ENCODE measurements at regions of chr5 and their contacts with region 1.

Region 1: GRCh38 chr5:96247097-96247701 is 185.8 kb downstream of the PCSK1 start:
- DNase-seq: peak in 4 of 5 donors; percentile 10 to 52 (median 44)
- ATAC-seq: peak; percentile 88 to 96 (median 95)
- H3K4me3 ChIP-seq: peak overlapping the region in 1 of 12 donors; percentile 1
- H3K27ac ChIP-seq: peak overlapping the region; percentile 51 to 81 (median 74)
- H3K4me1 ChIP-seq: peaks cover 0 to 44% (median 15%) of the 10 kb centered on the region in 12 donors
- H3K27me3 ChIP-seq: no peaks in the 10 kb centered on the region
- CTCF ChIP-seq: no peak
- POLR2A ChIP-seq: no peak

Region 2: DNA sequence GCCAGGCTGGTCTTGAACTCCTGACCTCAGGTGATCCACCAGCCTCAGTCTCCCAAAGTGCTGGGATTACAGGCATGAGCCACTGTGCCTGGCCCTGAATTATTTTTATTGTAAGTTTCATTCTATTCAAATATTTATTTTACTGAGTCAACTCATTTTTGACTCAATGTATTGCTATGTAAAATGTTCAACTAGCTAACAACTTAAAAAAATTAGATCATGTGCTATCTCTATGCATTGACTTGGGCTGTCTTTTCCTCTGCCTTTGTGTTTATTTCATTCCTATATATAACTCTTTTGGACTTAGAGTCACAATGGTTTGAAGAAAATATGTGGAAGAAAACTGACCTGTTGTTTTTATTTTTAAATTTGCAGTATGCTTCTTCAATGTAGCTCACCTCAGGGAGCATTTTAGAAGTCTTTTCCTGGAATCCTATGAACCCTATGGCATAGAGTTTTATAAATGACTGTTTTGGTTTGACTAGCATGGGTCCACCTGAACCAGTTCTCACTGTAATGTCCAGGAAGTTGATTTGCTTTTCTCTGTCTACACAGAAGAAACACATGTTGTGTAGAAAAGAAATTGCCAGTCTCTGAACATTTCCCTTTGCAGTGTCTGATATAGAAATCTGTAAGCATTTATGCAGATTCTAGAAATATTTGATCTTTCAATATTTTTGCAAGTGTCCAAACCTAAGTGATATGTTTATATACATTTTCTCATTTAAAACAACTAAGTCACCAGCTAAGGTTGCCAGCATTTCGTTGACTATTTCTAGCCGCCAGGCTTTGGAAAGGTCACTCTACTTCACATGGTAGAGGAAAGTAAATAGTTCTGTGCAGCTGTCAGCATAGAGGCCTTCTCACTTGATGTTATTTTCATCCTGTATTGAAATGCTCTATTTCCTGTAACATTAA is 47.0 kb after region 1 on chr5:
- intact Hi-C with region 1: loop called in 2 of 10 experiments (anchors 5 kb)
- DNase-seq: peak in 1 of 5 donors; percentile 30
- ATAC-seq: peak; percentile 53 to 78 (median 71)
- H3K4me3 ChIP-seq: no peak overlapping the region
- H3K27ac ChIP-seq: peak overlapping the region in 11 of 12 donors; percentile 33 to 75 (median 54)
- H3K4me1 ChIP-seq: peaks cover 0 to 42% (median 12%) of the 10 kb centered on the region in 12 donors
- H3K27me3 ChIP-seq: no peaks in the 10 kb centered on the region
- CTCF ChIP-seq: no peak
- POLR2A ChIP-seq: no peak

Region 3: GRCh38 chr5:96324708-96325107 is 77.5 kb after region 1 on chr5:
- intact Hi-C with region 1: loop called in 1 of 10 experiments (anchors 10 kb)
- DNase-seq: no peak
- ATAC-seq: no peak
- H3K4me3 ChIP-seq: no peak overlapping the region
- H3K27ac ChIP-seq: no peak overlapping the region
- H3K4me1 ChIP-seq: peaks cover 0 to 10% (median 0%) of the 10 kb centered on the region in 12 donors
- H3K27me3 ChIP-seq: no peaks in the 10 kb centered on the region
- CTCF ChIP-seq: no peak
- POLR2A ChIP-seq: no peak

Region 4: DNA sequence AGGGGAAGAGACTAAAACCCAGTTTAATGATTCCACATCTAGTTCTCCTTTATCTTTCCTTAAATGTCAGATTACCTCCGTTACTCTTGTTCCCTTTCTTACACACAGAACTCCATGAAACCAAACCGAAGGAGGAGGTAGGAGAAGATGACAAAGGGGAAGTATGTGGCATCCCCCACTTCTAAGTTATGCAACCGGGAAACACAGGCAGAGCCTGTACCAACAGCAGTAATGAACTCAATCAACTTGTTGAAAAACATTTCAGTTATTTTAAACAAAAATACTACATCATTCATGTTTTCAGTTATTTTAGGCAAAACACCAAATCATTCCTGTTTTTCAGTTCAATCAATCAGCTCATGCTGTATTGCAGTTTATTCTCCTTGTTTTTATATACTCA is 84.0 kb after region 1 on chr5:
- intact Hi-C with region 1: loop called in 4 of 10 experiments (anchors 5 to 10 kb)
- DNase-seq: no peak
- ATAC-seq: no peak
- H3K4me3 ChIP-seq: no peak overlapping the region
- H3K27ac ChIP-seq: no peak overlapping the region
- H3K4me1 ChIP-seq: peaks cover 0 to 25% (median 0%) of the 10 kb centered on the region in 12 donors
- H3K27me3 ChIP-seq: no peaks in the 10 kb centered on the region
- CTCF ChIP-seq: no peak
- POLR2A ChIP-seq: no peak